Activated naive CD4-positive, alpha-beta T cell treated with anti-CD3 and anti-CD28 coated beads for 36 hours (primary cell): ENCODE measurements at regions of chr20 and their contacts with region 1.

Region 1: GRCh38 chr20:44460795-44461141 is 14.9 kb upstream of the TTPAL start:
- DNase-seq: no peak
- H3K4me3 Mint-ChIP-seq: no peak overlapping the region
- H3K27ac Mint-ChIP-seq: no peak overlapping the region
- H3K4me1 Mint-ChIP-seq: no peaks in the 10 kb centered on the region
- H3K27me3 Mint-ChIP-seq: no peaks in the 10 kb centered on the region

Region 2: GRCh38 chr20:44388466-44389023 is 72.2 kb before region 1 on chr20:
- CTCF ChIA-PET with region 1: interaction called, 4 read pairs
- intact Hi-C with region 1: loop called (anchors 1 kb)
- DNase-seq: peak; percentile 90
- H3K4me3 Mint-ChIP-seq: peak overlapping the region; percentile 22
- H3K27ac Mint-ChIP-seq: no peak overlapping the region
- H3K4me1 Mint-ChIP-seq: peaks cover 11% of the 10 kb centered on the region
- H3K27me3 Mint-ChIP-seq: peaks cover 3% of the 10 kb centered on the region